RWPE1 (cell line): ENCODE measurements at regions of chr6 and their contacts with region 1.

Region 1: GRCh38 chr6:7998103-7998725 is 66.0 kb downstream of the BLOC1S5 start:
- DNase-seq: no peak
- H3K27ac ChIP-seq: peak overlapping the region; percentile 65
- CTCF ChIP-seq: no peak

Region 2: DNA sequence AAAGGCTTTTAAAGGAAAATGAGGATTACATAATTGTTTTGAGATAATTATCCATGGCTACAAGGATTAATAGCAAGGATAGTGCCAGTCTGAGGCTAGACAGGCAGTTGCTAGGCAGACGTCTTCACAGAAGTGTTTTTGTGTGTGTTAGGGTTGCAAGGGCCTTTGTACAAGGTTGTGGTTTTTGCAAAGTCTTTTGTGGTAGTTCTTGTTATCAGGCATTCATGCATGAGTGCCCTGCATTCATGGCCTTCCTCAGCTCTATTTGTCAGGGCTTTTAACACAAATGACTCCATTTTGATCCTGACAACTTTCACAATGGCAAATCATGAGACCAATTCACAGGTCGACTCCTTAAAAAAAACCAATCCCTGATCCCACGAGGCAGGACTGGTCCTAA is 19.5 kb before region 1 on chr6:
- CTCF ChIA-PET with region 1: no interaction called
- POLR2A ChIA-PET with region 1: interaction called, 19 read pairs
- DNase-seq: no peak
- H3K27ac ChIP-seq: no peak overlapping the region
- CTCF ChIP-seq: no peak

Region 3: GRCh38 chr6:8195040-8195713 is 197.0 kb after region 1 on chr6:
- CTCF ChIA-PET with region 1: no interaction called
- POLR2A ChIA-PET with region 1: no interaction called
- DNase-seq: no peak
- H3K27ac ChIP-seq: no peak overlapping the region
- CTCF ChIP-seq: no peak